Left ventricle myocardium superior (tissue), 1 donor: ENCODE measurements at regions of chr12 and their contacts with region 1.

Region 1: GRCh38 chr12:32794281-32794680 is 38.6 kb upstream of the YARS2 start:
- DNase-seq: no peak
- ATAC-seq: peak; percentile 35

Region 2: GRCh38 chr12:32043928-32044549 is 750.2 kb before region 1 on chr12:
- intact Hi-C with region 1: no loop called
- DNase-seq: no peak
- ATAC-seq: no peak

Region 3: GRCh38 chr12:32896432-32897273 is 102.4 kb after region 1 on chr12 and contains the start of gene PKP2:
- intact Hi-C with region 1: loop called (anchors 10 kb)
- DNase-seq: peak; percentile 82
- ATAC-seq: peak; percentile 83
- total RNA-seq, gene PKP2: 423 TPM